Heart right ventricle (tissue), 16 donors: ENCODE measurements at regions of chr12 and their contacts with region 1.

Region 1: DNA sequence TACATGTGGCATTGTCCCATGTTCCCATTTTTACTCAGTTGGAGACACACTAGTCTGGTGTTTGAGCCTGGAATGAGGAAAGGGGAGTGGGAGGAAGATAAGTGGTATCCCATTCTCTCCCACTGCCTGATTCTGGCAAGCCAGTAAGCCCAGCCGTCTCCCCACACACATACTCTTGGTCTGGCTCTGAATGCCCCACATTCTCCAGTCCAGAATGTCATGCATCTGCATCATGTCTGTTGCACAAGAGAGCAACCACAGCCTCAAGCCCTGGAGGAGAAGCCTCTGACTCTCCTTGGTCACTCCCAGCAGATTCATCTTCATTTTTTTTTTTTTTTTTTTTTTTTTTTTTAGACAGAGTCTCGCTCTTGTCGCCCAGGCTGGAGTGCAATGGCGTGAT is 48.0 kb downstream of the DRAM1 start:
- DNase-seq: peak in 1 of 2 donors; percentile 60
- ATAC-seq: peak; percentile 89 to 97 (median 92)
- H3K4me3 ChIP-seq: no peak overlapping the region
- H3K27ac ChIP-seq: peak overlapping the region in 9 of 10 donors; percentile 58 to 85 (median 77)
- H3K4me1 ChIP-seq: peaks cover 0 to 35% (median 0%) of the 10 kb centered on the region in 9 donors
- H3K27me3 ChIP-seq: no peaks in the 10 kb centered on the region
- CTCF ChIP-seq: no peak

Region 2: DNA sequence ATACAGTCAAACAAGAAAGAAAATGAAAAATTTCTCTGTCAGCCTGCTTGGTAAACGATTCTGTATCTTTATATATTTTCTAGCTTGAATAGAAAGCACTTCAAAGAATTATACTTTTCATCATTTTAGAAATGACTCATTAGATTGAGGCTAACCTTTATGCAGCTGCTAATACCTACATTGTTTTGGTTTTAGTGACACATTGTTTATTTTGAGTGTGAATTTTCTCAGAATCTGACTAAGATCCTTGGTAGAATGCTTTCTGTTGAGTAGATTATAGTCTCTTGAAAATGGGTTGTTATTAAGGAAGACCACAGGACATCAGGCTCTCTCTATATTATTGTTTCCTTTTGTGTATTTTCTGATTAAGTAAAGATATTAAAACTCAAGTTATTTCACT is 272.4 kb after region 1 on chr12 and contains the start of gene PMCH:
- intact Hi-C with region 1: no loop called
- DNase-seq: no peak
- ATAC-seq: no peak
- H3K4me3 ChIP-seq: no peak within 1 kb of the TSS
- H3K27ac ChIP-seq: no peak within 1 kb of the TSS
- H3K4me1 ChIP-seq: no peaks in the 10 kb centered on the region
- H3K27me3 ChIP-seq: no peaks in the 10 kb centered on the region
- CTCF ChIP-seq: no peak
- total RNA-seq, gene PMCH: not detected

Region 3: DNA sequence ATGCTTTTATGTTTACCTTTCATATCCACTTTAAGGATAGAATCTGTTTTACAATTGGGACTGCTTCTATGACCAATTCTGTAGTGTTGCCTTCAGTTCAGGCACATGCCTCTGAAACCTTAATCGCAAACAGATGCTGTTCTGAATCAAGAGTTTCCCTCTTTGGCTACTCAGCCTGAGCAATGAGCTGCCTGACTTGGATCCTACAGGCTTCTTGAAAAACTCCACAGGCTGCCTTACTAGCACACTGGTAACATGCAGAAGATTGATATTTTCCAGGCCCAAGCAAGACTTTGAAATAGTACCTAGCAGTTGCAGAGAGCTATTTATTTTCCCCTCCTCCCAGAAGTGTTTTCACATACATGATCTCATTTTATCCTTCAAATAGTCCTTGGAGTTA is 307.1 kb after region 1 on chr12:
- intact Hi-C with region 1: no loop called
- DNase-seq: peak in 1 of 2 donors; percentile 5
- ATAC-seq: peak in 4 of 8 donors; percentile 48 to 87 (median 66)
- H3K4me3 ChIP-seq: no peak overlapping the region
- H3K27ac ChIP-seq: no peak overlapping the region
- H3K4me1 ChIP-seq: no peaks in the 10 kb centered on the region
- H3K27me3 ChIP-seq: no peaks in the 10 kb centered on the region
- CTCF ChIP-seq: no peak

Region 4: DNA sequence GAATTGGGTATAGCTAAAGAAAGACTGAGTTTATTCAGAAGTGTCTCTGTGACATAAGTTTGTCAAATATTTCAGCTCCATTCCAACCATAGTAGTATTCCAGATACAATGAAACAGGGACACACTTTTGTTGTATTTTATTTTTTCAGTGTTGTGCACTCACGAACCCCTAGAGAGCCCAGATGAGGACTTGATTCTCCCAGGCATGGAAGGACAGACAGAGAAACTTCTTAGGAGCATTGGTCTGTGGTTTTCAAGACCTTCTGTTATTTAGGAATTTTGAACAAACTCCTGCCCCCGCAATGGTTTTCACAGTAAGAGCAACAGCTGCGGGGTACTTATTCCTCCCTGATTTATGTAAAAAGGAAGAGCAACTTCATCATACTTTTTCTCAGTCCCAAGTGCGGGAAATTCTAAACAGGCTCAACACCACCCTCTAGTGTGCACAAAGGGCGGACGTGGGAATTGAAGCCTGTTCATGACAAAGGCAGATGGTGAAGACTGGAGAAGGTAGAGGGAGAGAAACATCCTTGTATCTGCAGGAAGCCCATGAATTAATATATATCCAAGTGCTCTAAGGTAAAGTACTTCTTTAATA is 844.1 kb after region 1 on chr12:
- intact Hi-C with region 1: loop called in 1 of 10 experiments (anchors 10 kb)
- DNase-seq: peak; percentile 23 to 33
- ATAC-seq: peak in 7 of 8 donors; percentile 67 to 86 (median 81)
- H3K4me3 ChIP-seq: no peak overlapping the region
- H3K27ac ChIP-seq: peak overlapping the region in 2 of 10 donors; percentile 17 to 28
- H3K4me1 ChIP-seq: no peaks in the 10 kb centered on the region
- H3K27me3 ChIP-seq: peaks cover 0 to 12% (median 0%) of the 10 kb centered on the region in 7 donors
- CTCF ChIP-seq: peak; percentile 22 to 69 (median 58)